ENCODE measurements at regions of chr10 and their contacts with region 1.

Region 1: DNA sequence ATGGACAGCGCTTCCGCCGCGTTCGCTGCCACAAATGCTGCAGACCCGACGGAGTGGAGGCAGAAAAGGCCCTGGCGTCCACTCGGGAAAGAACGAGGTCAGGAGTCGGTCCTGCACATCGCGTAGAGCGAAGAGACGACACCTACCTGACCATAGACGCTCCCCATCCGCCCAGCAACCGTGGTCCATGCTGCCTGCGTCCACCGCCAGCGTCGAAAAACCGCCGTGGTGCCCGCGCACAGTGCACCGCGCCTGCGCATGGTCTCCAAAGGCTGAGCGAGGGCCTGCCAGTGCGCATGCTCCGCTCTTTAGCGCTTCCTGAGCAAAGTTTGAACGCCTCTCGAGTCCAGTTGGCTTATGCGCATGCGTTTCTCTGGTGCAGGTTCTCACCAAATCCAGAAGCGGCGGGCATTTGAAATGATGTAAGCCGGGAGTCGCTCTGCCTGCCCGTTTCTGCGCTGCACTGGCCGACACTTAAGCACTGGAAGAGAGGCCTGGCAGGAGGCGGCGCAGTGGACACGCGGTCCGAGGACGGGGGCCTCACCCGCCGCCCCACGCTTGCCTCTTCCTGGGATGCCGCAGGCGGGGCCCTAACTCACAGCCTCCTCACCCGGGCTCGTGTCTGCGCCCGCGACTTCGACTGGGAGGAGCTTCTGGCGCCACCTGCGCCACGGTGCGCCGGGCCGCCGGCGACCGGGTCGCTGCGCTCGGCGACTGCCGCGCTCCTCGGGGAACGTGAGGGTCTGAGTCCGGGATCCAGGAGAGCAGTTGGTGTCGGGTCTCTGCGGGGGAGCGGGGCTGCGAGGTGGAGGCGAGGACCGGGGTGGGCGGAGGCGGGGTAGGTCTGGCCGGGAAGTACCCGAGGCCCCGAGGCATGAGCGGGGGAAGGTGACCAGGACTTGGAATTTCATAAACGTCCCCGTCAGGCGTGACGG is at the start of gene FAM24B:
- DNase-seq: peak; percentile 98
- H3K4me3 Mint-ChIP-seq: peak within 1 kb of the TSS; percentile 98
- H3K27ac Mint-ChIP-seq: peak within 1 kb of the TSS; percentile 96
- H3K4me1 Mint-ChIP-seq: peaks cover 38% of the 10 kb centered on the region
- H3K27me3 Mint-ChIP-seq: no peaks in the 10 kb centered on the region
- total RNA-seq, gene FAM24B: 14.2 and 15.2 TPM in 2 replicates

Region 2: GRCh38 chr10:122980209-122981065 is 100.8 kb after region 1 on chr10 and contains the start of gene PSTK:
- intact Hi-C with region 1: loop called (anchors 1 kb)
- DNase-seq: peak; percentile 96
- H3K4me3 Mint-ChIP-seq: peak within 1 kb of the TSS; percentile 91
- H3K27ac Mint-ChIP-seq: peak within 1 kb of the TSS; percentile 98
- H3K4me1 Mint-ChIP-seq: peaks cover 16% of the 10 kb centered on the region
- H3K27me3 Mint-ChIP-seq: peaks cover 10% of the 10 kb centered on the region
- total RNA-seq, gene PSTK: 4.5 and 4.8 TPM in 2 replicates